Heart left ventricle (tissue), 16 donors: ENCODE measurements at regions of chr6 and their contacts with region 1.

Region 1: GRCh38 chr6:44265007-44265721 is at the start of gene NFKBIE:
- DNase-seq: peak; percentile 97
- ATAC-seq: peak; percentile 79 to 96 (median 92)
- H3K4me3 ChIP-seq: peak within 1 kb of the TSS; percentile 59 to 96 (median 78)
- H3K27ac ChIP-seq: peak within 1 kb of the TSS in 11 of 12 donors; percentile 61 to 93 (median 80)
- H3K4me1 ChIP-seq: peaks cover 0 to 45% (median 26%) of the 10 kb centered on the region in 12 donors
- H3K27me3 ChIP-seq: peaks cover 0 to 17% (median 8%) of the 10 kb centered on the region in 9 donors
- CTCF ChIP-seq: peak in 5 of 12 donors; percentile 17 to 40 (median 24)
- POLR2A ChIP-seq: peak; percentile 28 to 88
- total RNA-seq, gene NFKBIE: 2.5 to 13.1 (median 3.8) TPM

Region 2: GRCh38 chr6:44285552-44286284 is 20.6 kb after region 1 on chr6:
- intact Hi-C with region 1: no loop called
- DNase-seq: no peak
- ATAC-seq: no peak
- H3K4me3 ChIP-seq: no peak overlapping the region
- H3K27ac ChIP-seq: no peak overlapping the region
- H3K4me1 ChIP-seq: no peaks in the 10 kb centered on the region
- H3K27me3 ChIP-seq: peaks cover 6 to 65% (median 27%) of the 10 kb centered on the region in 9 donors
- CTCF ChIP-seq: no peak
- POLR2A ChIP-seq: no peak

Region 3: GRCh38 chr6:44304282-44305199 is 39.4 kb after region 1 on chr6:
- intact Hi-C with region 1: loop called in 4 of 10 experiments (anchors 5 kb)
- DNase-seq: no peak
- ATAC-seq: peak in 2 of 4 donors; percentile 16 to 17
- H3K4me3 ChIP-seq: no peak overlapping the region
- H3K27ac ChIP-seq: no peak overlapping the region
- H3K4me1 ChIP-seq: peaks cover 0 to 12% (median 0%) of the 10 kb centered on the region in 12 donors
- H3K27me3 ChIP-seq: no peaks in the 10 kb centered on the region
- CTCF ChIP-seq: peak; percentile 50 to 76 (median 64)
- POLR2A ChIP-seq: no peak

Region 4: GRCh38 chr6:44312901-44313788 is 48.0 kb after region 1 on chr6 and contains the start of gene AARS2:
- intact Hi-C with region 1: loop called in 3 of 10 experiments (anchors 5 kb)
- DNase-seq: peak; percentile 87 to 94 (median 89)
- ATAC-seq: peak; percentile 80 to 93 (median 92)
- H3K4me3 ChIP-seq: peak within 1 kb of the TSS; percentile 60 to 100 (median 96)
- H3K27ac ChIP-seq: peak within 1 kb of the TSS; percentile 56 to 91 (median 80)
- H3K4me1 ChIP-seq: peaks cover 0 to 36% (median 10%) of the 10 kb centered on the region in 12 donors
- H3K27me3 ChIP-seq: peaks cover 0 to 5% (median 0%) of the 10 kb centered on the region in 9 donors
- CTCF ChIP-seq: peak; percentile 93 to 100 (median 98)
- POLR2A ChIP-seq: peak in 1 of 2 donors; percentile 58
- total RNA-seq, gene AARS2: 5.0 to 9.8 (median 7.6) TPM

Region 5: GRCh38 chr6:44338228-44339122 is 73.3 kb after region 1 on chr6:
- intact Hi-C with region 1: loop called (anchors 1 to 5 kb)
- DNase-seq: peak in 4 of 5 donors; percentile 44 to 58 (median 46)
- ATAC-seq: peak; percentile 57 to 83 (median 78)
- H3K4me3 ChIP-seq: no peak overlapping the region
- H3K27ac ChIP-seq: peak overlapping the region in 1 of 12 donors; percentile 42
- H3K4me1 ChIP-seq: peaks cover 0 to 12% (median 5%) of the 10 kb centered on the region in 12 donors
- H3K27me3 ChIP-seq: peaks cover 0 to 7% (median 0%) of the 10 kb centered on the region in 9 donors
- CTCF ChIP-seq: peak; percentile 51 to 79 (median 61)
- POLR2A ChIP-seq: no peak

Region 6: DNA sequence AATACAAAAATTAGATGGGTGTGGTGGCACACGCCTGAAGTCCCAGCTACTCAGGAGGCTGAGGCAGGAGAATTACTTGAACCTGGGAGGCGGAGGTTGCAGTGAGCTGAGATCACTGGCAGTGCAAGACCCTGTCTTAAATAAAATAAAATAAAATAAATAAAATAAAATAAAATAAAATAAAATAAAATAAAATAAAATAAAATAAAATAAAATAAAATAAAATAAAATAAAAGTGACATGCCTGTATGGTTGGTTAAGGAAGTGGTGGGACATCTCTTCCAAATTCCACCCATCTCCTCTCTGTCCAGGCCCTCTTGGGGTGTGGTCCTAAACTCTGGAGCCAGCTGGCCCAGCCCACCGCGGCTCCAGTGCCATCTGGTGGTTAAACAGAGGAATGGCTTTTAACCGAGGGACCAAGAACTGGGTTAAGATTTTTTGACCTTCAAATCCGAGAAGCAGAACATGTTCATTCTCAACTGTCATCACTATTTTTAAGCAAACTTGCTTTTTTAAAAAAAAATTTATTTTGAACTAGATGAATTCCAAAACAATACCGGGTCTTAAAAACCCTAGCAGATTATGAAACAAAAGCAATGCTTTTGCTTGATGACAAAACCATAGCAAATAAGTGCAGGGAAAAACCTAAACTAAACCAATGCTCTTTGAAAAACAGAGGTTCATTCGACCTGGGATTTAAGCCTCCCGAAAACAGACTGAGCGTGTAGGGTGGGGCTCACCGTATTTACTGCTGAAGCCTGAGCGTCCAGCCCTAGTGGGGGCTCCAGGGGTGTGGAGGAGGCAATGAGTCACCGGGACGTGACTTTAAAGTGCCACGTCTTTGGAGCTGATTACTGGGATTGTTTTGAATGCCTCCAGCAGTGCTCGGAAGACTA is 191.2 kb after region 1 on chr6:
- intact Hi-C with region 1: loop called in 1 of 10 experiments (anchors 10 kb)
- DNase-seq: peak in 1 of 5 donors; percentile 38
- ATAC-seq: peak in 3 of 4 donors; percentile 77 to 81 (median 81)
- H3K4me3 ChIP-seq: peak overlapping the region in 4 of 12 donors; percentile 14 to 20 (median 18)
- H3K27ac ChIP-seq: no peak overlapping the region
- H3K4me1 ChIP-seq: peaks cover 0 to 25% (median 10%) of the 10 kb centered on the region in 12 donors
- H3K27me3 ChIP-seq: no peaks in the 10 kb centered on the region
- CTCF ChIP-seq: peak; percentile 70 to 92 (median 83)
- POLR2A ChIP-seq: no peak

Region 7: DNA sequence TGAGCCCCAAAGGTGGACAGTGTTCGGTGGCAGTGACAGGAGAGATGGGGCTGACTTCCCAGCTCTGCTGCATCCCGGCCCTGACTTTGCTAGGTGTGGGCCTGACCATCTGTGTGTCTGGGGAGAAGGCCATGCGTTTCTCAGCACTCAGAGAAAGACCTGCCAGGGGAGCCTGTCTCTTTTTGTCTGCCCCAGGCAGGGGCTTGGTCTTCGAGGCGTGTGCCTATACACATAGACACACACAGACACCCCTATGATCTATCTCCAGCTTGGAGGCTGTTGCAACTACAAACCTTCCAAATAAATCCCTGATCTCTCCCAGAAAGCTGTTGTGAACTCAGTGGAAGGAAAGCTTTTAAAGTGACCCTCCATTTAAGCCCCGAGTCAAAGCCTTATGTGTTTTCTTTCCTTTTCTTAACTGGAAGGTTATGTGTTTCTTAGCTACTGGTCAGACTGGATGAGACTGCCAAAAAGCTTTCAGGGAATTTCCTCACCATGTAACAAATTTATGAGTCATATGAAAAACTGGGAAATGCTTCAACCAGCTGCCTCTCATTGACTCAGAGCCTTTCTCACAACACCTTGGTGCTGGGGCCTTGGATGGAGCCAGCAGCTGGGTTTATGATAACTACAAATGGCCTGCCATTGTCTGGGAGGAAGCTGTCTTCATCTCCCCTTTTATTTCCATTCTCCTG is 224.9 kb after region 1 on chr6:
- intact Hi-C with region 1: no loop called
- DNase-seq: peak in 1 of 5 donors; percentile 38
- ATAC-seq: peak; percentile 54 to 89 (median 82)
- H3K4me3 ChIP-seq: no peak overlapping the region
- H3K27ac ChIP-seq: peak overlapping the region in 9 of 12 donors; percentile 29 to 80 (median 56)
- H3K4me1 ChIP-seq: peaks cover 0 to 14% (median 2%) of the 10 kb centered on the region in 12 donors
- H3K27me3 ChIP-seq: no peaks in the 10 kb centered on the region
- CTCF ChIP-seq: no peak
- POLR2A ChIP-seq: no peak